ENCODE measurements at regions of chr7 and their contacts with region 1.

Region 1: DNA sequence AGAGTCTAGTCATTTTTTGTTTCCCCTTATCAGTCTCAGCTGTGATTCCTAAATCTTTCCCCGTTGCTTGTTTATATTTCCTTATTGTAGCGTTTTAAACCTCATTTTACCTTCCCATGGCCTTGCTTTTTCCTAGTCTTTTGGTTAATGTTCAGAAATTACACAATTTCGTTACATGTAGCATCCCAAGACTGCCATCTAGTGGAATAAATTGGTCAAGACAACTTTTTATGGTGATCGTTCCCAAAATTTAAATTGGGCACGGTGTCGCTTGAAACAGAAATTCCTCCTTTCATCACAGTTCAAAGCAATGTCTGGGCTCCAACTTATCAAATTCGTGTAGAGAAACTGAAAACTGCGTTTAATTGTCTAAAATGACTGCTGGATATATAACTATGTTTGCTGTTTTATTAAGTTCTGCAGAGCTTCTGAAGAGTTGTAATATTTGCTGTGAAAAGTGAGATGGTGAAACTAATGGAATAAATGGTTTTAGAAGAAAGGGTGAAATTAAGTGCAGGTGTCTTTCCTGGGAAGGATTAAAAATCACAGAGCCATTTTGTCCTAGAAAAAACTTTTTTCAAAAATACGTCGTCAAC is 370.2 kb downstream of the PHF14 start:
- DNase-seq: peak; percentile 69
- H3K4me3 Mint-ChIP-seq: no peak overlapping the region
- H3K27ac Mint-ChIP-seq: no peak overlapping the region
- H3K4me1 Mint-ChIP-seq: peaks cover 2% of the 10 kb centered on the region
- H3K27me3 Mint-ChIP-seq: peaks cover 9% of the 10 kb centered on the region

Region 2: DNA sequence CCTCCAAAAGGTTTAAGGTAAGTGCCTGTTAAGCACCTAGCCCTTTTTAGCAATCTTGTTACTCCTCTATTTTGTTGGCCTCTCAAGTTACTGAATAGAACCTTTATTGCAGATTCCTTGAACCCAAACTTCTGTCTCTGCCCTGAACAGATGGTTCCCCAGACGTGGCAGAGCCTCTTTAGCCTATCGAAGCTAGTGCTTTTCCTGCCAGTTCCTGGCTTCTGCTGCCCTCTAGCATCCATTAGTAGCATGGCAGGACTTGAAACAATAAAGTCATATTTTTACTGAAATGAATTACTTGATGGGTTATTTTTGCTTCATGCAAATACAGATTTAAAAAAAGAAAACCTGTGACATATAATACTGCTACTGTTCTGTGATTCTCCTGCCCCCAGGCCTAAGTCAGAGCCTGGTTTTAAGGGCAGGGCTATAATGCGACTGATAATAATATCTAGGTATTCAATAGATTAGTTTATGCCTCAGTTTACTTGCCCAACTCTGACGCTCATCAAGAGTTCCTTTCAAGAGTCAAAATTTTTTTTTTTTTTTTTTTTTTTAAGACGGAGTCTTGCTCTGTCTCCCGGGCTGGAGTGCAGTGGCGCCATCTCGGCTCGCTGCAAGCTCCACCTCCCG is 454.5 kb before region 1 on chr7:
- intact Hi-C with region 1: loop called (anchors 5 kb)
- DNase-seq: peak; percentile 77
- H3K4me3 Mint-ChIP-seq: peak overlapping the region; percentile 37
- H3K27ac Mint-ChIP-seq: no peak overlapping the region
- H3K4me1 Mint-ChIP-seq: peaks cover 7% of the 10 kb centered on the region
- H3K27me3 Mint-ChIP-seq: no peaks in the 10 kb centered on the region

Measured in activated CD4-positive, alpha-beta T cell treated with anti-CD3 and anti-CD28 coated beads, Interleukin-2, amount 10 ng/mL, durations not matched to agents 24 days and 14 days (primary cell).